ENCODE measurements at regions of chr16 and their contacts with region 1.

Region 1: GRCh38 chr16:78002915-78003538 is 19.3 kb upstream of the CLEC3A start:
- H3K4me3 ChIP-seq: no peak overlapping the region
- H3K27ac ChIP-seq: no peak overlapping the region
- H3K4me1 ChIP-seq: no peaks in the 10 kb centered on the region
- CTCF ChIP-seq: peak; percentile 81

Region 2: DNA sequence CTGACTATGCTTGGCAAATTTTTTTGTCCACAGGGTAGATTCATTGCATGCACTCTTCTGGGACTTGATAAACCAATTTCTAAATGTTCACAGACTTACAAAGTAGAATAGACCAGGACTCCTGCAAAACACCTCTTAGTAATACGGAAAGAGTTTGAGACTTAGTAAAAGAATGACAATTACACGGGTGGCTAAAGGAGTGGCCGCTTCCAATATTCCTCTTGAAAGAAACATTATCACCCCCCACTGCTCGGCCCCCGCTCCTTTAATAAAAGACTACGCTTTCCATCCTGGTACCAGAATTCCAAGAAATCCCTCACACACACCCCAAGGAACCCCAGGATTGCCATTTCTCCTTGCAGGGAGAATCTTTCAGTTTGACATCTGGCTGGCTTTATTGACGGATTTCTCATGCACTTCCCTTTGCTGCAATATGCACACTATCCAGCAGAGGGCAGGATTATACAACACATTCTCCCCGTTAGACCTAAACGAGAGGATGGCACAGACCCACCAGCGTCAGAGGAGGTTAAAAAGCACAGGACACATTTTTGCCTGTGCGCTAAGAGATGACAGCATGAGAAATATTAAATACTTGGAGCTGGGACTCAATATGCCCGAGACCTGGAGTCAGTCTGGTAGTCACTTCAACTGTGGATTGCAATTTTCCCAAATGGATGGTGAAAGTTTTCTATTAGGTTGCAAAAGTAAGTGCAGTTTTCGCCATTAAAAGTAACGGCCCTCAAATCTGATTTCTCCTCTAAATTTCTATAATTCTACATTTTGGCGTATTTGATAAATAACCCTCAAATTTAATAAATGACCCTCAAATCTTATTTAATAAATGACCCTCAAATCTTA is 327.3 kb before region 1 on chr16:
- CTCF ChIA-PET with region 1: interaction called, 35 read pairs
- POLR2A ChIA-PET with region 1: no interaction called
- H3K4me3 ChIP-seq: no peak overlapping the region
- H3K27ac ChIP-seq: no peak overlapping the region
- H3K4me1 ChIP-seq: no peaks in the 10 kb centered on the region
- CTCF ChIP-seq: peak; percentile 79

Region 3: DNA sequence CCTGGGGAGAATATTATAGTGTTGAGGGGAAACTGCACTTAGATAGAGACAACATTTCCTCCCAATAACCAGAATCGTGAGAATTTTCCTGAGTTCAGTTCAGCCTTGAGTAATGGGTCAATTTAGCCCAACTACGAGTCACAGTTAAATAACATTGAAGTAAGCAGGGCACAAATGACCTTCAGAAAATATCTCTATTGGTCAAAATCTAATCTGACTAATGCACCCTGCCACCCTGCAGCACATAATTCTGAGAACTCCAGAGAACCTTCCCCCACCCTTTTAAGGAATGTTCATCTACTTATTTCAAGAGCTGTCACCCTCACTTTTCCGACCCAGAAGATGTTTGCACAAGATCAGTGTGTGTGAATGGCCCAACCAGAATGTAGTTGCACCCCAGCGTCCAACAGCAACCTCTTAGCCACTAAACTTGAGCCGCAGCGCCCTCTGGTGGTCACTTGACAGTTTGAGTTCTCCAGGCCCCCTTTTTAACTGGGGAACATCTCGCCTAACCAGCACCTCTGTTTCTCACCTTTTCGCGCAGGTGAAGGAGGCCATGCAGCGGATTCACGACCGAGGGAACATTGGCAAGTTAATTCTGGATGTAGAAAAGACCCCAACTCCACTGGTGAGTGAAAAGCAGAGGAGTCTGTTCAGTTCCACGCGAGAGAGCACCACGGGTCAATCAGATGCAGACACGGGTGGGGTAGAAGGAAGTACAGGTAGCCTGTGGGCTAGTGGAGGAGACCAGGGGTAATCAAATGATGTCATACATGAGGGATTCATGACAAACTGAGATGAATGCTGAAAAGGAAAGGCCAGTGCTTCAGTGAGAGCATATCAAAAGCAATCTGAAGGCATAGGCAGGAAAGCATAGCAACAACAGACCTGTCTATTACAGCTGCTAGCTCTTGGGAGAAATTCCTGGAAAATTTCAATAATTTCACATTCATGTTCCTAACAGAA is 31.4 kb before region 1 on chr16:
- CTCF ChIA-PET with region 1: interaction called, 22 read pairs
- POLR2A ChIA-PET with region 1: no interaction called
- H3K4me3 ChIP-seq: no peak overlapping the region
- H3K27ac ChIP-seq: no peak overlapping the region
- H3K4me1 ChIP-seq: no peaks in the 10 kb centered on the region
- CTCF ChIP-seq: peak; percentile 54

Region 4: GRCh38 chr16:77991691-77992090 is 11.3 kb before region 1 on chr16:
- CTCF ChIA-PET with region 1: interaction called, 11 read pairs
- POLR2A ChIA-PET with region 1: no interaction called
- H3K4me3 ChIP-seq: no peak overlapping the region
- H3K27ac ChIP-seq: no peak overlapping the region
- H3K4me1 ChIP-seq: peaks cover 2% of the 10 kb centered on the region; the same call in 1 of the 2 replicates
- CTCF ChIP-seq: no peak

Region 5: DNA sequence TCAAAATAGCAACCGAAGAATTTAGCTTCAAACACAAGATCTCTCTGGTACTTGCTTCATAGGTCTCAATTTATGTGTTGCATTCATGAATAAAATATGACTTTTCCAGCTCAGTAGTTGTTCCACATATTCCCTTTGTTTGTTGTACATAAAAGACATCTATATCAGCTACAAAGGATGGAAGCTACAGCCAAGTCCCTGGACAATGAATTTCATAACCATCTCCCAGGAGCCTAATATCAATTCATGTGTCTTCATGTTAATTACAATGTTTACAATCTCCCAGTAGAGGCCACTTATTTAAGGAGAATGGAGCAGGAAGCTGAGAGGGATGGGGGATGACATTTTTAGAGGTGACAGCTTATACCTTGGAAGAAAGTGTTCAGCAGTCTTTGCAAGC is 22.6 kb after region 1 on chr16:
- CTCF ChIA-PET with region 1: interaction called, 11 read pairs
- POLR2A ChIA-PET with region 1: no interaction called
- H3K4me3 ChIP-seq: no peak overlapping the region
- H3K27ac ChIP-seq: no peak overlapping the region
- H3K4me1 ChIP-seq: no peaks in the 10 kb centered on the region
- CTCF ChIP-seq: no peak

Region 6: DNA sequence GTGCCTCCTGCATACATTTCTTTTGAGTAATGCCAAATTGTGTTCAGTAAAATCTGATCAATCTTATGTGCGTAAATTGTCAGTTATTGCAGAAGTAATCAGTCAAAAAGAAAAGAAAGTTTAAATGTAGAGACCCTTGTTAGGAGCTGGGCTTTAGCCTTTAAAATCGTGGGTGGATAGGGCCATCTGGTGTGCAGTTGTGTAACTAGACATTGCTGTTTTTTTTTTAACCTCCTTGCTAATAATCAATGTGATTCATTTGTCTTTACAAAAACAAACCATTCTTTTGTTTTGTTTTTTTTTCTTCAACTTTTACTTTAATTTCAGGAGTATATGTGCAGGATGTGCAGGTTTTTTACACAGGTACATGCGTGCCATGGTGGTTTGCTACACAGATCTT is 91.1 kb after region 1 on chr16:
- CTCF ChIA-PET with region 1: interaction called, 10 read pairs
- POLR2A ChIA-PET with region 1: no interaction called
- H3K4me3 ChIP-seq: no peak overlapping the region
- H3K27ac ChIP-seq: no peak overlapping the region
- H3K4me1 ChIP-seq: 0 out of 2 replicates have a peak, but pooled peaks cover 2% of the 10 kb centered on the region
- CTCF ChIP-seq: peak; percentile 32; the same call in 1 of the 2 replicates

Region 7: DNA sequence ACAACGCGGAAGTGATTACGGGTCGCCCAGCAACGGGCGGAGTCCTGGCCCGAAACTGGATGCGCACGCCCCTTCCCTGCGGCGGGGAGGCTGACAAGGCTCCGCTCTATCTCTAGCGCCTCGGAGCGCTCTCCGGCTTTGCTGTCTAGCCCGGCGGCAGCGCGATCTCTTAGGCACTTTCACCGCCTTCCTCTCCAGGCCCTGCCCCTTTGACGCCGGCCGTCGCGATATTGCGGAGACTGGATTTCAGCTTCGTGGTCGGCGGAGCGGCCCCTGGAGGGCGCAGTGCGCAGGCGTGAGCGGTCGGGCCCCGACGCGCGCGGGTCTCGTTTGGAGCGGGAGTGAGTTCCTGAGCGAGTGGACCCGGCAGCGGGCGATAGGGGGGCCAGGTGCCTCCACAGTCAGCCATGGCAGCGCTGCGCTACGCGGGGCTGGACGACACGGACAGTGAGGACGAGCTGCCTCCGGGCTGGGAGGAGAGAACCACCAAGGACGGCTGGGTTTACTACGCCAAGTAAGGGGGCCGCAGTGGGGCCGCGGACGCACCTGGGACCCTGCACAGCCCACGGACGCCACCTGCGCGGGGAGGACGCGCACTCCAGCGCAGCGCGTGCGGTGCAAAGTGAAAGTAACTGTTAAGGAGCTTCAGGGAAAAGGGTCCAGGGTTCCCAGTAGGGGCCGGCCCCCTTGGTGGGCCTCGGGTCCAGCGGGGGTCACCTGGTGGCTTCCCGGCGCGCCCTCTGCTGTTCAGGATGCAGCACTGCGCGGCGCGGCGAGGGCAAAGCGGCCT is 96.5 kb after region 1 on chr16 and contains the start of gene WWOX:
- CTCF ChIA-PET with region 1: interaction called, 10 read pairs
- POLR2A ChIA-PET with region 1: no interaction called
- H3K4me3 ChIP-seq: peak within 1 kb of the TSS; percentile 96
- H3K27ac ChIP-seq: peak within 1 kb of the TSS; percentile 86
- H3K4me1 ChIP-seq: 0 out of 2 replicates have a peak, but pooled peaks cover 2% of the 10 kb centered on the region
- CTCF ChIP-seq: peak; percentile 86

Measured in HEK293 (cell line).